K562 (cell line): ENCODE measurements at regions of chrX and their contacts with region 1.

Region 1: DNA sequence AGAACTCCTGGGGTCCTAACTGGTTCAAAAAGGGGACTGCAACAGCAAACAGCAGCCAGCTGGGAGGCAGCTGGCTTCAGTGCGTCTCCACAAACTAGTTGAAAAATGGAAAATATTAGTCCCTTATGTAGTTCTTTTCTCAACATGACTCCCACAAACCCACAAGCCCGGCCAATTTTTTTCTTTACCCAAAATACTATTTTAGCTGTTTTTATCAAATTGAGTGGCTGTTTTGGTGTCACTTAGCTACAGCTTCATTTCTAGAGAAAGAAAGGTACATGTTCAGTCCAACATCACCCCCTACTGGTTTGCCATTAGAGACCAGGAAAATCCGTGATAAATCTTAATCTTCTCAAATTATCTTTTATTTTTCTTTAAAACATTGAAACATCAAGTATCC is 97.2 kb downstream of the GUCY2F start:
- DNase-seq: peak; percentile 5 to 20 (median 8)
- ATAC-seq: no peak
- H3K4me3 ChIP-seq: no peak overlapping the region
- H3K27ac ChIP-seq: no peak overlapping the region
- H3K4me1 ChIP-seq: no peaks in the 10 kb centered on the region
- H3K27me3 ChIP-seq: no peaks in the 10 kb centered on the region
- CTCF ChIP-seq: peak; percentile 19 to 63 (median 37); a peak in 4 of 6 replicates
- EP300 ChIP-seq: no peak
- POLR2A ChIP-seq: no peak
- RAD21 ChIP-seq: peak; percentile 39 to 51; a peak in 3 of 4 replicates

Region 2: GRCh38 chrX:108584617-108585211 is 800.0 kb before region 1 on chrX:
- CTCF ChIA-PET with region 1: no interaction called
- POLR2A ChIA-PET with region 1: no interaction called
- in situ Hi-C with region 1: loop called (anchors 25 kb)
- intact Hi-C with region 1: loop called (anchors 1 kb)
- DNase-seq: peak; percentile 7 to 34 (median 14)
- ATAC-seq: no peak
- H3K4me3 ChIP-seq: no peak overlapping the region
- H3K27ac ChIP-seq: no peak overlapping the region
- H3K4me1 ChIP-seq: no peaks in the 10 kb centered on the region
- H3K27me3 ChIP-seq: no peaks in the 10 kb centered on the region
- CTCF ChIP-seq: peak; percentile 31 to 53 (median 40); a peak in 3 of 6 replicates
- EP300 ChIP-seq: no peak
- POLR2A ChIP-seq: no peak
- RAD21 ChIP-seq: no peak; a peak in 1 of 4 replicates

Region 3: GRCh38 chrX:108699368-108699767 is 685.3 kb before region 1 on chrX:
- CTCF ChIA-PET with region 1: interaction called, 3 read pairs
- POLR2A ChIA-PET with region 1: no interaction called
- in situ Hi-C with region 1: no loop called
- intact Hi-C with region 1: loop called (anchors 5 kb)
- DNase-seq: peak in 3 of 4 experiments; percentile 5 to 8 (median 5)
- ATAC-seq: peak; percentile 51; the same call in 1 of the 3 replicates
- H3K4me3 ChIP-seq: no peak overlapping the region
- H3K27ac ChIP-seq: no peak overlapping the region
- H3K4me1 ChIP-seq: no peaks in the 10 kb centered on the region
- H3K27me3 ChIP-seq: no peaks in the 10 kb centered on the region
- CTCF ChIP-seq: peak; percentile 1 to 41 (median 22); a peak in 3 of 6 replicates
- EP300 ChIP-seq: no peak
- POLR2A ChIP-seq: no peak
- RAD21 ChIP-seq: peak; percentile 32 to 48; a peak in 3 of 4 replicates

Region 4: DNA sequence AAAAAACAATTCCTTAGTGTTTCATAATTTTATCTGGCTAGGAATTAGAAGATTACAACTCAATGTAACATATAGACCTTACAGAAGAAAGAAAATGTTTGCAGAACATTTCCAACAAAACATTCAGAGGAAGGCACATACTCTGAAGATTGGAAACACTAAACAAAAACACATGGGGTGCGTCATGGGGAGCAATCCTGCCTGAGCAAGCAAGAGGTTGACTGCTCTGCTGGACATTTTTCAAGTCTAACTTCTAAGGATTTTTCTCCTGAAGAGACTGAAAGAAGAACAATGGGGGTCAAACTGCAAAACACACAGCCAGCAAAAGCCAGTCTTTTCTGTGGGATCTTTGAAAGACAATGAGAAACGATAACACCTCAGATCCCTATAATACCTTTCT is 85.6 kb before region 1 on chrX:
- CTCF ChIA-PET with region 1: no interaction called
- POLR2A ChIA-PET with region 1: no interaction called
- in situ Hi-C with region 1: no loop called
- intact Hi-C with region 1: no loop called
- DNase-seq: no peak
- ATAC-seq: no peak
- H3K4me3 ChIP-seq: no peak overlapping the region
- H3K27ac ChIP-seq: no peak overlapping the region
- H3K4me1 ChIP-seq: no peaks in the 10 kb centered on the region
- H3K27me3 ChIP-seq: no peaks in the 10 kb centered on the region
- CTCF ChIP-seq: no peak
- EP300 ChIP-seq: no peak
- POLR2A ChIP-seq: no peak
- RAD21 ChIP-seq: no peak